ENCODE measurements at regions of chr18 and their contacts with region 1.

Region 1: GRCh38 chr18:62131301-62131909 is 55.5 kb downstream of the PIGN start:
- DNase-seq: peak in 4 of 5 donors; percentile 30 to 53 (median 40)
- ATAC-seq: peak in 3 of 4 donors; percentile 50 to 71 (median 64)
- H3K4me3 ChIP-seq: no peak overlapping the region
- H3K27ac ChIP-seq: no peak overlapping the region
- H3K4me1 ChIP-seq: no peaks in the 10 kb centered on the region
- H3K27me3 ChIP-seq: no peaks in the 10 kb centered on the region
- CTCF ChIP-seq: peak; percentile 81 to 98 (median 94)
- POLR2A ChIP-seq: no peak

Region 2: GRCh38 chr18:61093965-61094364 is 1037.4 kb before region 1 on chr18:
- intact Hi-C with region 1: loop called in 2 of 10 experiments (anchors 10 kb)
- DNase-seq: no peak
- ATAC-seq: no peak
- H3K4me3 ChIP-seq: no peak overlapping the region
- H3K27ac ChIP-seq: no peak overlapping the region
- H3K4me1 ChIP-seq: no peaks in the 10 kb centered on the region
- H3K27me3 ChIP-seq: peaks cover 0 to 4% (median 0%) of the 10 kb centered on the region in 9 donors
- CTCF ChIP-seq: no peak
- POLR2A ChIP-seq: no peak

Region 3: GRCh38 chr18:61329398-61329797 is 802.0 kb before region 1 on chr18:
- intact Hi-C with region 1: loop called in 5 of 10 experiments (anchors 5 to 10 kb)
- DNase-seq: no peak
- ATAC-seq: no peak
- H3K4me3 ChIP-seq: no peak overlapping the region
- H3K27ac ChIP-seq: no peak overlapping the region
- H3K4me1 ChIP-seq: peaks cover 0 to 12% (median 0%) of the 10 kb centered on the region in 12 donors
- H3K27me3 ChIP-seq: peaks cover 3 to 20% (median 12%) of the 10 kb centered on the region in 9 donors
- CTCF ChIP-seq: no peak
- POLR2A ChIP-seq: no peak

Region 4: DNA sequence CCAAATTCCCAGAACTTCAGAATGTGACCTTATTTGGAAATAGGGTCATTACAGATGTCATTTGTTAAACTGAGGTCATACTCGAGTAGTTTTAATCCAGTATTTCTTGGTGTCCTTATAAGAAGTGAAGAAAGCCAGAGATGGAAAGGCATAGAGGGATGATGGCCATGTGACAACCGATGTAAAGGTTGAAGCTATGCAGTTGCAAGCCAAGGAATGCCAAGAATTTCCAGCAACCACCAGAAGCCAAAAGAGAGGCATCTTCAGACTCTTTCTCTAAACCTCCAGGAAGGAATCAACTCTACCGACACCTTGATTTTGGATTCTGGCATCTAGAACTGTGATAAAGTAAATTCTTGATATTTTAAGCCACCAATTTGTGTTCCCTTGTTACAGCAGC is 556.0 kb before region 1 on chr18:
- intact Hi-C with region 1: loop called in 1 of 10 experiments (anchors 5 kb)
- DNase-seq: no peak
- ATAC-seq: no peak
- H3K4me3 ChIP-seq: no peak overlapping the region
- H3K27ac ChIP-seq: no peak overlapping the region
- H3K4me1 ChIP-seq: peaks cover 0 to 17% (median 7%) of the 10 kb centered on the region in 12 donors
- H3K27me3 ChIP-seq: no peaks in the 10 kb centered on the region
- CTCF ChIP-seq: no peak
- POLR2A ChIP-seq: no peak

Region 5: GRCh38 chr18:61901323-61901986 is 229.9 kb before region 1 on chr18:
- intact Hi-C with region 1: loop called in 7 of 10 experiments (anchors 5 to 10 kb)
- DNase-seq: peak in 3 of 5 donors; percentile 27 to 47 (median 30)
- ATAC-seq: peak; percentile 62 to 79 (median 72)
- H3K4me3 ChIP-seq: no peak overlapping the region
- H3K27ac ChIP-seq: no peak overlapping the region
- H3K4me1 ChIP-seq: peaks cover 0 to 7% (median 0%) of the 10 kb centered on the region in 12 donors
- H3K27me3 ChIP-seq: peaks cover 0 to 13% (median 0%) of the 10 kb centered on the region in 9 donors
- CTCF ChIP-seq: peak; percentile 81 to 93 (median 90)
- POLR2A ChIP-seq: no peak

Region 6: DNA sequence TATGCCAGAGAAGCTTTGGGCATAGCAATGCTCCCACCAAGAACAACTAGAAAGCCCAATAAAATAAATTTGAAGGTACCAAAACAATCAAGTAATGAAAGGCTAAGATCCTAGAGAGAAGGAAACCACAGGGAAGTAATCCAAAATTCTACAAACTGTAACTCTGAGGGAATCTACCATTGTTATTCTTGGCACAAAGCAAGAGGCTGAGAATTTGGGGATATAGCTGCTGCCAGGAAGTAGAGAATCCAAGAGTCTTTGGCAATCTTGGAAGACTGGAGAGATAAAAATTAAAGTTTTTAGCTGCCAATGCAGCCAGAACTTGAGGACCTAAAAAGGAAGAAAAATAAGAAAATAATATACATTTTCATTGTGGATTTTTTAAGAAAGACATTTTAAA is 13.1 kb before region 1 on chr18:
- intact Hi-C with region 1: no loop called
- DNase-seq: no peak
- ATAC-seq: peak in 2 of 4 donors; percentile 63 to 68
- H3K4me3 ChIP-seq: no peak overlapping the region
- H3K27ac ChIP-seq: no peak overlapping the region
- H3K4me1 ChIP-seq: peaks cover 0 to 12% (median 0%) of the 10 kb centered on the region in 12 donors
- H3K27me3 ChIP-seq: no peaks in the 10 kb centered on the region
- CTCF ChIP-seq: no peak
- POLR2A ChIP-seq: no peak

Measured in heart left ventricle (tissue), 16 donors.